ENCODE measurements at regions of chr14 and their contacts with region 1.

Region 1: GRCh38 chr14:103899316-103899715 is 28.9 kb upstream of the TDRD9 start:
- DNase-seq: no peak
- ATAC-seq: peak; percentile 46
- H3K4me3 Mint-ChIP-seq: no peak overlapping the region
- H3K27ac Mint-ChIP-seq: no peak overlapping the region
- H3K4me1 Mint-ChIP-seq: no peaks in the 10 kb centered on the region
- H3K27me3 Mint-ChIP-seq: peaks cover 9% of the 10 kb centered on the region
- CTCF ChIP-seq: no peak

Region 2: DNA sequence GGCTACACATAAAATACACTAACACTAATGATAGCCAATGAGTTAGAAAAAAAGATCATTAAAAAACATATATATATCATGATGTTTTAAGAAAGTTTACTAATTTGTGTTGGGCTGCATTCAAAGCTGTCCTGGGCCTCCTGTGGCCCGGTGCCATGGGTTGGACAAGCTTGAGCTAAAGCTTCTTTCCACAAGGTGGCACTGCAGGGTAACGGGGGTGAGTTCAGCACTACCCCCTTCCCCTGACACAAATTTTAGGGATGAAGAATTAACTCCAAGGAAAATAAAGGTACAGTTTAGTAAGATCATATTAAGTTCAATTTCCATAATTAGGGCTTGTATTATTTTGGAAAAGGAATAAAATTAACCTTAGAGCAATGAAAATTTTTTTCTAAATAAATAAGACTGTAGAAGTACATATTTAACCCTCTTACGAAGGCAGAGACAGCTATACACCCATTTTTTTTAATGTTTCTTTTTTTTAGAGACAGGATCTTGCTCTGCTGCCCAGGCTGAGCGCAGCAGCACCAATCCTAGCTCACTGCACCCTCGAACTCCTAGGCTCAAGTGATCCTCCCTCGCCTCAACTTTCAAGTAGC is 90.8 kb before region 1 on chr14:
- CTCF ChIA-PET with region 1: interaction called, 118 read pairs
- POLR2A ChIA-PET with region 1: no interaction called
- DNase-seq: peak; percentile 82
- ATAC-seq: peak; percentile 91
- H3K4me3 Mint-ChIP-seq: no peak overlapping the region
- H3K27ac Mint-ChIP-seq: no peak overlapping the region
- H3K4me1 Mint-ChIP-seq: no peaks in the 10 kb centered on the region
- H3K27me3 Mint-ChIP-seq: no peaks in the 10 kb centered on the region
- CTCF ChIP-seq: peak; percentile 59; the same call in 1 of the 2 replicates

Region 3: GRCh38 chr14:103855063-103855733 is 44.1 kb before region 1 on chr14:
- CTCF ChIA-PET with region 1: interaction called, 27 read pairs
- POLR2A ChIA-PET with region 1: no interaction called
- DNase-seq: peak; percentile 75
- ATAC-seq: peak; percentile 79
- H3K4me3 Mint-ChIP-seq: peak overlapping the region; percentile 35
- H3K27ac Mint-ChIP-seq: peak overlapping the region; percentile 86; the same call in 1 of the 2 replicates
- H3K4me1 Mint-ChIP-seq: peaks cover 43% of the 10 kb centered on the region
- H3K27me3 Mint-ChIP-seq: no peaks in the 10 kb centered on the region; the same call in 1 of the 2 replicates
- CTCF ChIP-seq: no peak

Region 4: DNA sequence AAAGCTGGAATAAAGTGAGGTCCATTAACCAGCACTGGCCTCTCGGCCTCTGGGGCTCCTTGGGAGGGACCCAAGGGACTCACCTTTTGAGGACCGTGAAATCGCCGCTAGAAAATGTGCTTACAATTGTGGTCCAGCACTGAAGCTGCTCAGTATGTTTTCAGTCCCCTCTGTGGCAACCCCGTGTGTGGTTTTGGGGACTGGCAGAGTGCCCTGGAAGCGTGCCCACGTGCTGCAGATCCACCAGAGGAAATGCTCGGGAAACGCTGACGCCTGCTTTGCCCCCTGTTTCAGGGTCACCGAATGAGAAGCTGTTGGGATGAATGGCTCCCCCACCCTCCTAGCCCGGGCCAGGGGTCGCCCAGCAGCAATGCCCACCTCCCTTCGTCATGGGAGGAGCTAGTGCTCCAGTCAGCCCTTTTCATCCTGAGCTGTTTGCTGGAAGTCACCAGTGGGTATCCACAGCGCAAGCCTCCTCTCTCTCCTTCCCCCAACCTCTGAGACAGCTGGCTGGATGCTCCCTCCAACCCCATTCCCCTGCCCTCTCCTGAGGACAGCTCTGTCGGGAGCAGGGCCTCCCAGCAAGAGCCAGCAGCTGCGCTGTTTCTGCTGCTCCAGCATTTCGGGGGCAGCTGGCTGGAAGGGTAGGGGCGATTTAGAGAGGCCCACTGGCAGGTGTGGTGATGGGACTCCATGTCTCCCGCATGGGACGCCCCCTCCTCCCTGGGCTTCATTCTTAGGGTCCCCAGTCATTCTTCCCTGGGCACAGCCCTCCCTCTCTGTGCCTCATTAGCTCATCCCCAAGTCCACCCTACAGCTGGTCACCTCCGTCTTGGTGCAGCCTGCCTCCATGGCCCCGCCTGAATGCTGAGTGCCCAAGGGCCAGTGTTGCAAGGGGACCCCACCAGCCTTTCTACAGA is 18.7 kb before region 1 on chr14:
- CTCF ChIA-PET with region 1: interaction called, 94 read pairs
- POLR2A ChIA-PET with region 1: no interaction called
- DNase-seq: no peak
- ATAC-seq: no peak
- H3K4me3 Mint-ChIP-seq: no peak overlapping the region
- H3K27ac Mint-ChIP-seq: no peak overlapping the region
- H3K4me1 Mint-ChIP-seq: peaks cover 20% of the 10 kb centered on the region
- H3K27me3 Mint-ChIP-seq: no peaks in the 10 kb centered on the region
- CTCF ChIP-seq: no peak

Region 5: GRCh38 chr14:103920981-103921854 is 21.9 kb after region 1 on chr14:
- CTCF ChIA-PET with region 1: interaction called, 43 read pairs
- POLR2A ChIA-PET with region 1: no interaction called
- DNase-seq: peak; percentile 92
- ATAC-seq: peak; percentile 95
- H3K4me3 Mint-ChIP-seq: peak overlapping the region; percentile 96
- H3K27ac Mint-ChIP-seq: peak overlapping the region; percentile 80
- H3K4me1 Mint-ChIP-seq: peaks cover 9% of the 10 kb centered on the region
- H3K27me3 Mint-ChIP-seq: no peaks in the 10 kb centered on the region
- CTCF ChIP-seq: peak; percentile 96